Activated CD4-positive, alpha-beta T cell treated with anti-CD3 and anti-CD28 coated beads for 36 hours (primary cell): ENCODE measurements at regions of chr20 and their contacts with region 1.

Region 1: DNA sequence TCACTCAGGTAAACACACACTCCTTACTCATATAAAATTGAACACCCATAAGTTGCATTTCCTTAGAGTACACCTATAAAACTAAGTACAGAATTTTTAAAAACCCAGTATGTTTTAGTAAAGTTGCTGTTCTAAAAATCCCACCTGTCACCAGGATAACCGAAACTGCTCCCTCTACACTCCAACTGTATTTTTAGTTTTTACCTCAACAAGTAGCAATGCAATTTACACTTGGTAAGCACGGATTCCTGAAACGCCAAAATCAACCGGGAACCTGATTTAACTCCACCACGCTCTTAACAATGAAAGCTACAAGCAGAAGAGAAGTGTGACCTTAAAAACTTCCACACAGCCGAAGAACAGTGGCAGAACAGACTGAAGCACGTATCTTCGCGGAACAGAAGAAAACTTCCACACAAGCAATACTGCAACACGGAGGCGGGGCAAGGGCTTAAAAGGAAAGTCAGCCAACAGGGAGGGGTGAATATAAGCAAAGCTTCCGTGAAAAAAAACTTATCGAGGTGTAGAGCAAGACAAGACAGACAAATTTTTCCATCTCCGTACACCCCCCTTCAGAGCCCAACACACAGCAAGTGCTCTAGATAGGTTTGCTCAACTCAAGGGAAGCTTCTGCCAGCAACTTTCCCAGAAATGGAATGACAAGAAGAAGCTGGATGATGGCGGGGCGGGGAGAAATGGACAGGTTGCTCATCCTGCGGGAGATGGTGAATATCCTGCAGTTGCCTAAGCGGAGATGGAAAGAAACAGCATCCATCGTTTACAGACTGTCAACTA is 1.4 kb downstream of the STAU1 start:
- DNase-seq: peak; percentile 85
- ATAC-seq: peak; percentile 49
- H3K4me3 Mint-ChIP-seq: peak overlapping the region; percentile 96
- H3K27ac Mint-ChIP-seq: peak overlapping the region; percentile 89
- H3K4me1 Mint-ChIP-seq: peaks cover 51% of the 10 kb centered on the region
- H3K27me3 Mint-ChIP-seq: no peaks in the 10 kb centered on the region

Region 2: DNA sequence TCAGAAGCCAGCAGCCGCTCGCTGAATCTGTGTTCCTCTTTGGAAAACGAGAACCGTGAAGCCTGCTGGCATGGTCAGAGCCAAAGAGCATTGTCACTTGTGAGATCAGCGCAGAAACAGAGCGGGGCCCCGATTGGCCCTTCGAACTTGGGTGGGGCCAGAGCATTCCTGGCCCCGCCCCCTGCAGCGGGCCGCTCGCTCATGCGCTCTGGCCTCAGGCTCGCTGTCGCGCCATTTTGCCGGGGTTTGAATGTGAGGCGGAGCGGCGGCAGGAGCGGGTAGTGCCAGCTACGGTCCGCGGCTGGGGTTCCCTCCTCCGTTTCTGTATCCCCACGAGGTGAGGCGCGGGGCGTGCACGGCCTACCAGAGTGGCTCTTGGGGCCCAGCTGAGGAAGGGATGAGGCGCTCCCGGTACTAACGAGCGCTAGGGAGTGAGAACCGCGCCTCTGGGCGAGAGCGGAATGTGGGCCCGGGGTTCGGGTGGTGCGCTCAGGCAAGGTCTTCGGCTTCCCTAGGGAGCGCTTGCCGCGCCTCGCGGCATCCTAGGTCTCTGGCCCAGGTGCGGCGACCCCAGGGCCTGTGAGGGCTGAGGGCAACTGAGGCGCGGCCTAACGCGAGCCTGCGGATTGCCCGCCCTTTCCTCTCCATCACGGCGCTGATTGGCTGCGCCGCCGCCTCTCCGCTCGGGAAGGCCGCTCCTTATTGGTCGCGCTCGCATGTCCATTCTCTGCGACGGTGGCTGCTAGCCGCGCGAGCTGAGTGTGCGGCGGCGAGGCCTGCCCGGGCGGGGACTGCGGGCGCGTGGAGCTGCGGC is 140.4 kb before region 1 on chr20 and contains the start of gene CSE1L:
- CTCF ChIA-PET with region 1: no interaction called
- POLR2A ChIA-PET with region 1: no interaction called
- intact Hi-C with region 1: loop called (anchors 1 to 5 kb)
- DNase-seq: peak; percentile 97
- ATAC-seq: peak; percentile 92
- H3K4me3 Mint-ChIP-seq: peak within 1 kb of the TSS; percentile 97
- H3K27ac Mint-ChIP-seq: peak within 1 kb of the TSS; percentile 99
- H3K4me1 Mint-ChIP-seq: peaks cover 30% of the 10 kb centered on the region
- H3K27me3 Mint-ChIP-seq: no peaks in the 10 kb centered on the region
- total RNA-seq, gene CSE1L: 119 to 126 TPM

Region 3: DNA sequence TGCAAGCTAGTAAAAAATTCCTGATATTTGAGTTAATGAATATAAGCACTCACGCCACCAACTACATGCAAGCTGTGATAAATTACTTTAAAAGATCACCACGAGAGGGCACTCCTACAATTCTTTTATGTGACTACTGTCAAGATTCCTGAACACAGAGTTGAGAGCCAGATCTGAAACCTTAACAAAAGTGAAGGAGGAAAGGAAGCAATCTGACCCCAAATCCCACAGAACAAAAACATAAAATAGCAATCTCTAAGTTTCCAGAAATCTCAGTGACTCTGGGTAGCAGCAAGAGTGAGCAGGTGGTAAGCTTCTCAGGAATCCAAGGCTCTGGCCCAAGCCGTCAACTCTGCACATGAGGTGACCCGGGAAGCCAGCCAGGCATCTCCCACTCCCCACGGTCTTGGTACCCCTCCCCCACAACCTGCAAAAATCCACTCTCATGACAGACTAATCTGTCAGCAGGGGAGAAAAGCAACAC is 53.7 kb before region 1 on chr20:
- CTCF ChIA-PET with region 1: interaction called, 7 read pairs
- POLR2A ChIA-PET with region 1: interaction called, 3 read pairs
- intact Hi-C with region 1: loop called in 1 of 2 experiments (anchors 1 kb)
- DNase-seq: no peak
- ATAC-seq: peak; percentile 61
- H3K4me3 Mint-ChIP-seq: no peak overlapping the region
- H3K27ac Mint-ChIP-seq: peak overlapping the region; percentile 37
- H3K4me1 Mint-ChIP-seq: peaks cover 4% of the 10 kb centered on the region
- H3K27me3 Mint-ChIP-seq: no peaks in the 10 kb centered on the region

Region 4: DNA sequence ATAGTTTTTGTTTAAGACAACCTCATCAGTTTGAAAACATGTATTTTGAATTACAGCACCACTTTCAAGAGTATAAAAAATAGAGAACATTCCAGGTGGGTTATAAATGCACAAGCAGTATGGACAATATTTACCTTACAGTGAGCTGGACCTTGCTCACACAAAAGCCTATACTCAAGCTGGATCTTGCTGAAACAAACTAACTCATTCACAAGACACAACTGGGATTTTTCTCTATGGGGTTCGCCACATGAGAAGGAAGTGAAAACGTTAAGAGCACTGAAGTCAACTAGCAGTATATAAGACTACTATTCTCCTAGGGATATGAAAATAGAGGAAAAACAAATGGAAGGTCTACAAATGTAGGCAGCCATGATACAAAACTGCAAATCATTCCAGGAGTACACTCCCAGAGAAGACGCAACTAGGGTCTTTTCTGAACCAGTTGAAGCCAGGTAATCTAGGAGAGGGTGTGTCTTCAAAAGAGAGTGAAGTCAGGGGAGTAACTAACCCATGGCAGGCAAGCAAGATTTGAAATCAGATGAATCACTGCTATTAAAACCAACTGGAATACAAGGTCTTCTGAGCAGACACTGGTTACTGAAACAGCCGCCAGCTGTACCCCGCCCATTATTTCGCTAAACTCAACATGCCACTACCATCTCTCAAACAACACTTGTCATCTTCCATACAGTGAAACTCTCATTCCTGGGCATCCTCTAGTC is 25.1 kb before region 1 on chr20:
- CTCF ChIA-PET with region 1: interaction called, 43 read pairs
- POLR2A ChIA-PET with region 1: interaction called, 12 read pairs
- intact Hi-C with region 1: loop called (anchors 1 to 2 kb)
- DNase-seq: no peak
- ATAC-seq: no peak
- H3K4me3 Mint-ChIP-seq: no peak overlapping the region
- H3K27ac Mint-ChIP-seq: peak overlapping the region; percentile 10
- H3K4me1 Mint-ChIP-seq: peaks cover 67% of the 10 kb centered on the region
- H3K27me3 Mint-ChIP-seq: no peaks in the 10 kb centered on the region

Region 5: GRCh38 chr20:49397525-49397924 is 210.8 kb after region 1 on chr20:
- CTCF ChIA-PET with region 1: no interaction called
- POLR2A ChIA-PET with region 1: no interaction called
- intact Hi-C with region 1: no loop called
- DNase-seq: no peak
- ATAC-seq: no peak
- H3K4me3 Mint-ChIP-seq: no peak overlapping the region
- H3K27ac Mint-ChIP-seq: no peak overlapping the region
- H3K4me1 Mint-ChIP-seq: no peaks in the 10 kb centered on the region
- H3K27me3 Mint-ChIP-seq: peaks cover 5% of the 10 kb centered on the region